Gastrocnemius medialis (tissue), 4 donors: ENCODE measurements at regions of chr19 and their contacts with region 1.

Region 1: GRCh38 chr19:30227661-30228428 is 144.3 kb upstream of the ZNF536 start:
- DNase-seq: no peak
- ATAC-seq: peak in 1 of 2 donors; percentile 64
- H3K4me3 ChIP-seq: peak overlapping the region; percentile 45 to 66 (median 54)
- H3K27ac ChIP-seq: peak overlapping the region in 1 of 4 donors; percentile 20
- H3K4me1 ChIP-seq: peaks cover 5 to 20% of the 10 kb centered on the region in 2 donors
- H3K27me3 ChIP-seq: peaks cover 49 to 73% (median 49%) of the 10 kb centered on the region in 3 donors
- CTCF ChIP-seq: peak in 4 of 5 experiments; percentile 9 to 59 (median 35)
- POLR2A ChIP-seq: no peak

Region 2: GRCh38 chr19:30312582-30313352 is 84.9 kb after region 1 on chr19:
- in situ Hi-C with region 1: no loop called
- intact Hi-C with region 1: no loop called
- DNase-seq: no peak
- ATAC-seq: no peak
- H3K4me3 ChIP-seq: no peak overlapping the region
- H3K27ac ChIP-seq: no peak overlapping the region
- H3K4me1 ChIP-seq: no peaks in the 10 kb centered on the region
- H3K27me3 ChIP-seq: no peaks in the 10 kb centered on the region
- CTCF ChIP-seq: no peak
- POLR2A ChIP-seq: no peak

Region 3: GRCh38 chr19:30406220-30407067 is 178.6 kb after region 1 on chr19:
- in situ Hi-C with region 1: no loop called
- intact Hi-C with region 1: loop called (anchors 5 kb)
- DNase-seq: no peak
- ATAC-seq: no peak
- H3K4me3 ChIP-seq: no peak overlapping the region
- H3K27ac ChIP-seq: no peak overlapping the region
- H3K4me1 ChIP-seq: peaks cover 0 to 6% of the 10 kb centered on the region in 2 donors
- H3K27me3 ChIP-seq: no peaks in the 10 kb centered on the region
- CTCF ChIP-seq: peak in 4 of 5 experiments; percentile 10 to 24 (median 17)
- POLR2A ChIP-seq: no peak